ENCODE measurements at regions of chr5 and their contacts with region 1.

Region 1: DNA sequence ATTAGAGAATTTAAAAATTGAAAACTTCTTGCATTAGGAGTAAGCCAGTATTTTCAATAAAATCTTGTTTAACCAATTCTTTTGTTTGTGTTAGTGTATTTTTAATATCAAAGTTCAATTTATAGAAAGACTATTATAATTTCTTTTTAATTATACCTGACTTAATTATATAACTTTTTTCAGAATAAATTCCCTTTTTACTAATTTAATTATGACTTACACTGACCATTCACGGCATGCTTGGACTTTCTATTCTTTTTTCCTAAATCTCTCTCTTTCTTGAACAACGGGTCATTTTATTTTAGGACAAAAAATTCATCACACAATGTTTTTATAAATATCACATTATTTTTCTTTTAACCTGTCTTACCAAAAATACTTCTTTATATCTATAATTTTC is 555.3 kb upstream of the PTGER4 start:
- DNase-seq: no peak

Region 2: GRCh38 chr5:40112875-40113274 is 11.5 kb before region 1 on chr5:
- intact Hi-C with region 1: loop called in 1 of 2 experiments (anchors 1 kb)
- DNase-seq: no peak